A673 (cell line): ENCODE measurements at regions of chr9 and their contacts with region 1.

Region 1: DNA sequence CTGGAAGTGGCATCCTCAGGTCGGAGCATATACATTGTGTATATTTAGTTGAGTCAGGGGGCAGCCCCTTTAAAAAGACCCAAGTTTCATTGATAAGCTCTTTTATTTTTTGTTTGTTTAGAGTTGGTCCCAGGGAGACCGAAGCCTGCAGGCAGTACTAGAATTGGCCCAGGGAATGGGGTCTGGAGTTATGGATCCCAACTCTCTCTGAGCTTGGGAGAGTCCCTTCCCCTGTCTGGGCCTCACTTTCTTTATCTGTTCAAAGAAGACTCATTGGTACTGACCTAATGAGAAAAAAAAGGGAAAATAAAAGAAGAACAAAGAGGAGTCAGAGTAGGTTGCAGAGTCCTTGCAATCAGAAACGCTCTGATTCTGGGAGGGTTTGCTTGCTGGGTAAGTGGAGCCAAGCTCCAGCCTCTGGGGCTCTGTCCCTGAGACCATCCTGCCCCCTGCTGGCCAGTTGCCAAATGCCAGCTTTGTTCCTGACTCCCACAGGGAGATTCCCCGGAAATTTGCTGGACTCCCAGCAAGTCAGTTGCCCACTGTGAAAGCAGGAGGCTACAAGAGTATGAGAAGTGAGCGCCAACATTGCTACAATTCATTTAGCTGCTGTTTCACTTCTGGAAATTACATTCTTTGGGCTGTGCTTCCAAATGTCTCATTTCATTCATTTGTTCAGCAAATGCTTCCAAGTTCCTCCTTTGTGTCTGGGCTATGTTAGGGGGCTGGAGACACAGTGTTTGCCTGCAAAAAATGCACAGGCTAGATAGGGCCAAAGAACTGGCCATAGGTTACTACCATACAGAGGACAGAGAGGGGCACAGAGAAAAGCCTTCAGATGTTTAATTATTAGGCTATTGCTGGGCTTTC is 156.2 kb downstream of the MELK start:
- DNase-seq: peak; percentile 86
- H3K4me3 ChIP-seq: no peak overlapping the region
- H3K27ac ChIP-seq: no peak overlapping the region
- H3K4me1 ChIP-seq: peaks cover 4% of the 10 kb centered on the region
- H3K27me3 ChIP-seq: no peaks in the 10 kb centered on the region
- CTCF ChIP-seq: peak; percentile 93

Region 2: DNA sequence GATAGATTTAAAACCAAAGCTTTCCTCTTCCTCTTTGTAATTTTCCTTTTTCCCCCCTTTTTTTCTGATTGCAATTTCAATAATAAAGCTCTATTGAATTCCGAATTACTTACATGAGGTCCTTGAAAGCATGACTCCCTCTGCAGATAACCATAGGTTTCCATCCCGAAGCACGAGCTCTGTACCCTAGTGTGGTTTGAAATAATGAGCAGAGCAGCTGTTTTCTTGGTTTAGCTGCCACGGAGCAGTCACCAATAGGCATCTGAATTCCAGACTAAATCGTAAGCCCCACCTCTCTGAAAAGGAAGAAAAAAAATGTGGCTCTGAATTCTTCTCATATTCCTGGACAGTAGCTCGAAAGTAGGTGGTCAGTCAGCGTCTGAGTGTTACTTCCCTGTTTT is 452.1 kb before region 1 on chr9:
- CTCF ChIA-PET with region 1: interaction called, 10 read pairs
- POLR2A ChIA-PET with region 1: no interaction called
- intact Hi-C with region 1: no loop called
- DNase-seq: no peak
- H3K4me3 ChIP-seq: no peak overlapping the region
- H3K27ac ChIP-seq: no peak overlapping the region
- H3K4me1 ChIP-seq: no peaks in the 10 kb centered on the region
- H3K27me3 ChIP-seq: no peaks in the 10 kb centered on the region
- CTCF ChIP-seq: no peak

Region 3: GRCh38 chr9:36632892-36633291 is 96.0 kb before region 1 on chr9:
- CTCF ChIA-PET with region 1: interaction called, 26 read pairs
- POLR2A ChIA-PET with region 1: no interaction called
- intact Hi-C with region 1: loop called (anchors 5 kb)
- DNase-seq: peak; percentile 44
- H3K4me3 ChIP-seq: no peak overlapping the region
- H3K27ac ChIP-seq: no peak overlapping the region
- H3K4me1 ChIP-seq: no peaks in the 10 kb centered on the region
- H3K27me3 ChIP-seq: no peaks in the 10 kb centered on the region
- CTCF ChIP-seq: peak; percentile 69